Panc1 (cell line): ENCODE measurements at regions of chr5 and their contacts with region 1.

Region 1: DNA sequence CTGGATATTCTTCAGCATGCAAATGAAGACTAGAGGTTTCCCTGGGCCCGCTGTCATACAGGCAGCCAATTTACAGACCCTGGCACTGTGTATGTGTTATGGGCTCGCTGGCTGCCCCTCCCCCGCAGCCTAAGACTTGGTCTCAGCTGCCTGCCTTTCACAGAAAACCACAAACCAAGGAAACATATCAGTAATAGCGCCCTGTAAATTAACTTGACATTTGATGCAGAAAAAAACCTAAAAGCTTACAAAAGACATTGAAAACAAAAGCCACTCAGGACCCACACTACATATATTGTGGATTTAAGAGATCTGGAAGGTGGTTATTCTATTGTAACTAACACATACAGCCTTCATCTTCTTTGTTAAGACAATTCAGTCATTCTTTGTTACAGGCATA is 287.0 kb upstream of the TMEM161B start:
- DNase-seq: no peak
- ATAC-seq: no peak
- H3K4me3 ChIP-seq: no peak overlapping the region
- H3K27ac ChIP-seq: no peak overlapping the region
- H3K4me1 ChIP-seq: no peaks in the 10 kb centered on the region
- H3K27me3 ChIP-seq: no peaks in the 10 kb centered on the region
- CTCF ChIP-seq: no peak

Region 2: GRCh38 chr5:88583471-88583870 is 27.8 kb after region 1 on chr5:
- CTCF ChIA-PET with region 1: no interaction called
- POLR2A ChIA-PET with region 1: interaction called, 14 read pairs
- in situ Hi-C with region 1: no loop called
- intact Hi-C with region 1: no loop called
- DNase-seq: no peak
- ATAC-seq: no peak
- H3K4me3 ChIP-seq: no peak overlapping the region
- H3K27ac ChIP-seq: no peak overlapping the region
- H3K4me1 ChIP-seq: no peaks in the 10 kb centered on the region
- H3K27me3 ChIP-seq: no peaks in the 10 kb centered on the region
- CTCF ChIP-seq: no peak

Region 3: GRCh38 chr5:88824892-88825583 is 269.4 kb after region 1 on chr5:
- CTCF ChIA-PET with region 1: no interaction called
- POLR2A ChIA-PET with region 1: no interaction called
- in situ Hi-C with region 1: no loop called
- intact Hi-C with region 1: no loop called
- DNase-seq: no peak
- ATAC-seq: peak; percentile 62; the same call in 1 of the 2 replicates
- H3K4me3 ChIP-seq: no peak overlapping the region
- H3K27ac ChIP-seq: peak overlapping the region; percentile 91
- H3K4me1 ChIP-seq: peaks cover 32% of the 10 kb centered on the region
- H3K27me3 ChIP-seq: no peaks in the 10 kb centered on the region
- CTCF ChIP-seq: no peak

Region 4: GRCh38 chr5:88845081-88845697 is 289.5 kb after region 1 on chr5:
- CTCF ChIA-PET with region 1: no interaction called
- POLR2A ChIA-PET with region 1: no interaction called
- in situ Hi-C with region 1: no loop called
- intact Hi-C with region 1: no loop called
- DNase-seq: no peak
- ATAC-seq: no peak
- H3K4me3 ChIP-seq: no peak overlapping the region
- H3K27ac ChIP-seq: no peak overlapping the region
- H3K4me1 ChIP-seq: no peaks in the 10 kb centered on the region
- H3K27me3 ChIP-seq: no peaks in the 10 kb centered on the region
- CTCF ChIP-seq: no peak